Gastrocnemius medialis (tissue), 4 donors: ENCODE measurements at regions of chr15 and their contacts with region 1.

Region 1: GRCh38 chr15:55993111-55993803 is at the start of gene NEDD4:
- DNase-seq: peak; percentile 77 to 78
- ATAC-seq: peak; percentile 98
- H3K4me3 ChIP-seq: peak within 1 kb of the TSS; percentile 80 to 99 (median 84)
- H3K27ac ChIP-seq: peak within 1 kb of the TSS; percentile 85 to 96 (median 88)
- H3K4me1 ChIP-seq: peaks cover 9% of the 10 kb centered on the region in 2 donors
- H3K27me3 ChIP-seq: no peaks in the 10 kb centered on the region
- CTCF ChIP-seq: peak in 3 of 5 experiments; percentile 41 to 75 (median 62)
- POLR2A ChIP-seq: peak; percentile 50 to 62
- total RNA-seq, gene NEDD4: 45.4 to 475 (median 205) TPM

Region 2: GRCh38 chr15:55654561-55655031 is 338.7 kb before region 1 on chr15:
- in situ Hi-C with region 1: no loop called
- intact Hi-C with region 1: no loop called
- DNase-seq: no peak
- ATAC-seq: no peak
- H3K4me3 ChIP-seq: no peak overlapping the region
- H3K27ac ChIP-seq: no peak overlapping the region
- H3K4me1 ChIP-seq: peaks cover 0 to 3% of the 10 kb centered on the region in 2 donors
- H3K27me3 ChIP-seq: no peaks in the 10 kb centered on the region
- CTCF ChIP-seq: no peak
- POLR2A ChIP-seq: no peak

Region 3: DNA sequence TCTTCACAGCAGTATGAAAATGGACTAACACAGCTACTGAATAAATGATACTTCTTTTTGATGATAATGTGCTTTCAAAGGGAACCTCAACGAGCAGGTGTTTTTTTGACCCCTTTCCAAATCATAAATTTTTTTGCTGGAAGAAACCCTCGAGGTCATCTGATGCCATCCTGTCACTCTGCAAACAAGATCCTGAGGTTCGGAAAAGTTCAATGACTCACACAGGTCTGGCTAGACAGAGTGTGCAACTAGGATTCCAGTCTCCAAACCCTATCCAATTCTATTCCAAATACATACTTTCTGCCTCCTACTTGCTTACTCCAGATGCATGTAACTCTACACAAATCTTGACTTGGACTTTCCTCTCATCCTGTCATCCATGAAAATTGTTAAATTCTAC is 124.5 kb before region 1 on chr15:
- in situ Hi-C with region 1: no loop called
- intact Hi-C with region 1: loop called (anchors 10 kb)
- DNase-seq: peak in 1 of 2 donors; percentile 53
- ATAC-seq: peak; percentile 95 to 96
- H3K4me3 ChIP-seq: no peak overlapping the region
- H3K27ac ChIP-seq: peak overlapping the region; percentile 76 to 87 (median 83)
- H3K4me1 ChIP-seq: peaks cover 51 to 59% of the 10 kb centered on the region in 2 donors
- H3K27me3 ChIP-seq: no peaks in the 10 kb centered on the region
- CTCF ChIP-seq: no peak
- POLR2A ChIP-seq: no peak

Region 4: DNA sequence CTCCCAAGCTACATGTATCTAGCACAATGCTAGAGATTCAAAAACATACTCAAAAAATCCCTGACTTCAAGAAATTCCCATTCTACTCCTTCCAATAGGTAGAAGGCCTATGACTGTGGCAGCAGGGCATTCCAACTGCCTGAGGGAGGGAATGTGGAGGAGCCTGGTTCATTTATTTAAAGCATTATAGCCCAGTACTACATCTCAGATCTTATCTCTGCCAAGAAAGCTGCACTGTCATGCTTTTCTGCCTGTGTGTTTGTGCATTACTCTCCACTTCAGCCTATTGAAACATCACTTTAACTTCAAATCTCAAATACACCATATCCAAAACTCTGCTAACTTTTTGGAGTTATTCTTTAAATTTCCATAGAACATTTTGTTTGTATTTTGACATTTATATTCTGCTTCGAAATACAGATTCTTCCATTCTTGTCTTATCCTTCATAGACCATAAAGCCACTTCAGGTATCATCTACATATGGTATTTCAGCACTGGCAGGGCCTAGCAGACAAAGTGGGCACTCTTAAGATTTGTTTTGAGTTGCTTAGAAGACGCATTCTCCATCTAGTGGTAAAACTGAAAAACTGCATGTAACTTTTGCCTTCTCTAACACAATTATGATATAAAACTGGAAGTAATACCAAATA is 59.3 kb after region 1 on chr15:
- in situ Hi-C with region 1: no loop called
- intact Hi-C with region 1: loop called (anchors 2 kb)
- DNase-seq: no peak
- ATAC-seq: peak; percentile 52 to 69
- H3K4me3 ChIP-seq: no peak overlapping the region
- H3K27ac ChIP-seq: no peak overlapping the region
- H3K4me1 ChIP-seq: no peaks in the 10 kb centered on the region
- H3K27me3 ChIP-seq: no peaks in the 10 kb centered on the region
- CTCF ChIP-seq: peak; percentile 49 to 84 (median 60)
- POLR2A ChIP-seq: no peak

Region 5: DNA sequence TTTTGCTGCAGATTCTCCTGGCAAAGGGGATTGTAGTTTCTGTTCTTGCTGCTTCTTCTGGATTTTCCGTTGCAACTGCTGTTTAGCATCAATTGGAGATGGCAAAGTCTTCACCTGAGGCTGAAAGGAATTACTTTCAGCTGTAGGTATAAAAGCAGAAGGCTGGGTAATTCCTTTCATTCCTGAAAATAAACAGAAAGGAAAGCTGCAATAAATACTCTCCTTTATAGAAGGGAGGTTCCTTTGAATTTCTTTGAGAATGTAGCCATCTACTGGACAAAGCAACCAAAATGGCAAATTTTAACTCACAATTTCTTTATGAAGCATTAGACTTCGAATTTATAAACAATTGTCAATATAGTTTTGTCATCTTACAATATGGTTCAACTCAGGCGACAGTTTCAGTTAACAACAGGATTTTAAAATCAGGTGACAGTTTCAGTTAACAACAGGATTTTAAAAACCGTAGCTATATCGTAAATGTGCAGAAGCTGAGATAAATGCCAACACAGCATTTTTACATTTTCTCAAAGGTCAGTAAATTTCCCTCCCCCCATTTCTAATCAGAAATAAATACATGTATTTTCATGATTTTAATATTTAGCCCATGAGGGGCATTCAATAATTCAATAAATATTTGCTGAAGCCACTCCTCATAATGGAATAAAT is 105.1 kb after region 1 on chr15:
- in situ Hi-C with region 1: no loop called
- intact Hi-C with region 1: loop called (anchors 2 kb)
- DNase-seq: no peak
- ATAC-seq: no peak
- H3K4me3 ChIP-seq: peak overlapping the region in 1 of 4 donors; percentile 5
- H3K27ac ChIP-seq: peak overlapping the region; percentile 80 to 92 (median 86)
- H3K4me1 ChIP-seq: peaks cover 43 to 50% of the 10 kb centered on the region in 2 donors
- H3K27me3 ChIP-seq: no peaks in the 10 kb centered on the region
- CTCF ChIP-seq: peak in 2 of 5 experiments; percentile 8 to 13
- POLR2A ChIP-seq: no peak